ENCODE measurements at regions of chr10 and their contacts with region 1.

Region 1: DNA sequence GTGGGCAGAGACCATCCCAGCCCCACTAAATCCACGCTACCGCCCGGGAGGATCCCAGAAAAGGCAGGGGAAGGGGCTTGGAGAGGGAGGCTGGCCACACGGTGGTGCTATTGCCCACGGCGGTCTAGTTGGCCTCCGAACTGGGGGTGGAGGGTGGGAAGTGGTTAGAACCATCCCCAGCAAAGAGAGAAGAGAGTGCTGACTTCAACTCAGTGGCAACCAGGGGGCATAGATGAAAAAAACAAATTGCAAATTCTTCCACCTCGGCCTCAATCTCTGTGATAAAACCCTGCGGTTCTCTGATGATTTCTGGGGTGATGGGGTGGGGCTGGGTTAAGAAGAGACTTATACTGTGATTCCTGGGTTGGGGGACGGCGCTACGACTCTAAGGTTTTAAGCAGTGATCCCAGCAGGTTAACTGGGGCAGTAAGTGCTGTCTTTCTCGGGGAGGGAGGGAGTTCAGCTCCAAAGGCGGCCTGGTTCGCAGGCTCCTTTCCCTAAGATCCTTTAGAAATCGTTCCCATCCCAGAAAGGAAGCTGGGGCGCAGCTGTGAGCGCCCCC is 154.5 kb upstream of the LYZL2 start:
- DNase-seq: peak; percentile 42
- ATAC-seq: peak; percentile 75
- H3K4me3 ChIP-seq: peak overlapping the region in 1 of 2 experiments; percentile 30; a peak in 1 of 4 replicates
- H3K27ac ChIP-seq: no peak overlapping the region
- H3K4me1 ChIP-seq: no peaks in the 10 kb centered on the region
- H3K27me3 ChIP-seq: no peaks in the 10 kb centered on the region
- CTCF ChIP-seq: peak; percentile 85

Region 2: DNA sequence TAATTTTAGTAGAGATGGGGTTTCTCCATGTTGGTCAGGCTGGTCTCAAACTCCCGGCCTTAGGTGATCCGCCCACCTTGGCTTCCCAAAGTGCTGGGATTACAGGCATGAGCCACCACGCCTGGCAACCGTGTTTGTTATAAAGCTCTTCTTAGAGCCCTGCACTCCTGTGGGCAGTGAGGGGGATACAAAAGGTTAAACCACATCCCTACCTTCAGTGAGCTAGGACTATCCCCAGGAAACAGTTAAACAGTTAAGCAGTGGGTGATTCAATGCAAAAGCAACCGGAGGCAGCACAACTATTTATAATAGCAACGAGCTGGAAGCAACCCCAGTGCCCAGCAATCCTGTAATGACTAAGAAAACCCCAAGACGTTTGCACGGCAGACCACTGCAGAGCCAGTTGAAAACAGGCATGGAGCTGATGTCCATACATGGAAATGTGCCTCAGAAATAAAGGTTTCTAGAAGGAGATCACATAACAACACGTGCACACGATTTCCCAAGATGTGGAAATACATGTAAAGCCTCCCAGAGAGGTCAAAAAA is 47.3 kb before region 1 on chr10:
- CTCF ChIA-PET with region 1: no interaction called
- POLR2A ChIA-PET with region 1: interaction called, 13 read pairs
- in situ Hi-C with region 1: no loop called
- intact Hi-C with region 1: no loop called
- DNase-seq: peak; percentile 39
- ATAC-seq: peak; percentile 92
- H3K4me3 ChIP-seq: no peak overlapping the region
- H3K27ac ChIP-seq: no peak overlapping the region
- H3K4me1 ChIP-seq: no peaks in the 10 kb centered on the region
- H3K27me3 ChIP-seq: no peaks in the 10 kb centered on the region
- CTCF ChIP-seq: no peak